Activated naive CD4-positive, alpha-beta T cell treated with anti-CD3 and anti-CD28 coated beads for 36 hours (primary cell): ENCODE measurements at regions of chr2 and their contacts with region 1.

Region 1: GRCh38 chr2:73736855-73737779 is at the start of gene TPRKB:
- DNase-seq: peak; percentile 99
- H3K4me3 Mint-ChIP-seq: peak within 1 kb of the TSS; percentile 88
- H3K27ac Mint-ChIP-seq: peak within 1 kb of the TSS; percentile 76
- H3K4me1 Mint-ChIP-seq: peaks cover 15% of the 10 kb centered on the region
- H3K27me3 Mint-ChIP-seq: no peaks in the 10 kb centered on the region
- total RNA-seq, gene TPRKB: 30.5 to 32.5 TPM

Region 2: GRCh38 chr2:73293534-73294171 is 443.5 kb before region 1 on chr2 and contains the start of gene EGR4:
- CTCF ChIA-PET with region 1: no interaction called
- intact Hi-C with region 1: loop called (anchors 2 kb)
- DNase-seq: peak; percentile 94
- H3K4me3 Mint-ChIP-seq: peak within 1 kb of the TSS; percentile 73
- H3K27ac Mint-ChIP-seq: no peak within 1 kb of the TSS
- H3K4me1 Mint-ChIP-seq: peaks cover 14% of the 10 kb centered on the region
- H3K27me3 Mint-ChIP-seq: peaks cover 65% of the 10 kb centered on the region
- total RNA-seq, gene EGR4: 0.07 to 0.12 TPM

Region 3: DNA sequence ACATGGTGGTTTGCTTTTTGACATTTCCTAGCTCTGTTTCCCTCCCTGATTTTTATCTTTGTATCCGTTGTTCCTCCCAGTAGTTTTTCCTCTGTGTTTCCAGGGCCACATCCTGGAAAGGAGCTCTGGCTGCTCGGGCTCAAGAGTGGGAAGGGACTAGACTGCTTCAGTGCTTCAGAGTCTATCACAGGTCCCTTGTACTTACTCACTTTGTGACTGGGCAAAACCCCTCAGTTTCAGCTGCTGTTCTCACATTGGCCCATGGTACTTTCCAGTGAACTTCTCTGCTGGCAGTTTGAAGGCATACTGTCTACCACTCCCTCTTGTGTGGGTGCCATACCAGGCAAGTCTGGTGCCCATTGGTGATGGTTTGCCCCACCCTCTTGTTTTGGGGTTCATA is 84.1 kb after region 1 on chr2:
- CTCF ChIA-PET with region 1: interaction called, 3 read pairs
- intact Hi-C with region 1: loop called (anchors 1 kb)
- DNase-seq: peak; percentile 78
- H3K4me3 Mint-ChIP-seq: no peak overlapping the region
- H3K27ac Mint-ChIP-seq: peak overlapping the region; percentile 79
- H3K4me1 Mint-ChIP-seq: peaks cover 33% of the 10 kb centered on the region
- H3K27me3 Mint-ChIP-seq: no peaks in the 10 kb centered on the region

Region 4: DNA sequence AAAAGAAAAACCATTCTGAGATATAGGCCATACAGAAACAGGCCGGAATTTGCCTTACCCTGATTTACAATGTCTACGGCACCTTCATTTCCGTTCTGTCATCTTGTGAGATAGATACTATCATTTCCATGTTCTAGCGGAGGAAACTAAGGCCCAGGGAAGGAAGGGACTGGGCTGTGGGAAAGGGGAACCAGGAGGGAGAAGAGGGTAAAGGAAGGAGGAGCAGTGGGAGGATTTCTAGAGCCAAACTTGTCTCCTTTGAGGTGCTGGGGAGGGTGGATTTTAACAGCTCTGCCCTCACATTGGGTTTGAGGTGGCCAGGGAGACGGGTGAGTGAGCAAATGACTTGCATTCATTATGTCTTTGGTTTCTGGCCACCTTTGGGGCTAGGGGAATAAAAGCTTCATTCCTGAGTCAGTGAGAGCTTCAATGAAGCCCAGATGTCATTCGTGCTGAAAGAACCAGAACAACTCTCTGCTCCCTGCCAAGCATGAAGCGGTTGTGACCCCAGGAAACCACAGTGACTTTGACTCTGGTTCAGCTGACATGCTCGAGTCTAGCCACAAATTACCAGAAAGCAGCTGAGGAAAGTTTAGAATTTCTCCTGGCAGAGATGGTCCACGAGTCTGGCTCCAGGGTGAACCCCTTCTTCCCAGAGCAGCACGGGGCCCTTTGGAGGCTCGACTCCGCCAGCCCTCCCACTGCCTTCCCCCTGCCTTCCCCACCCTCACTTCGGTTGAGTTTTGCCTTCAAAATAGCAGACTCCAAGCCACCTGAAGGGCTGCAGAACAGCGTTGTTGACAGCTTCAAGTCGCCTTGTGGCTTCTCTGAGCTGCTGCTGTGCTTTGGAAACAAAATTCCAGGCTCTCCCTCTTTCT is 159.5 kb after region 1 on chr2:
- CTCF ChIA-PET with region 1: no interaction called
- intact Hi-C with region 1: no loop called
- DNase-seq: peak; percentile 72
- H3K4me3 Mint-ChIP-seq: peak overlapping the region; percentile 8
- H3K27ac Mint-ChIP-seq: peak overlapping the region; percentile 65
- H3K4me1 Mint-ChIP-seq: peaks cover 33% of the 10 kb centered on the region
- H3K27me3 Mint-ChIP-seq: no peaks in the 10 kb centered on the region

Region 5: DNA sequence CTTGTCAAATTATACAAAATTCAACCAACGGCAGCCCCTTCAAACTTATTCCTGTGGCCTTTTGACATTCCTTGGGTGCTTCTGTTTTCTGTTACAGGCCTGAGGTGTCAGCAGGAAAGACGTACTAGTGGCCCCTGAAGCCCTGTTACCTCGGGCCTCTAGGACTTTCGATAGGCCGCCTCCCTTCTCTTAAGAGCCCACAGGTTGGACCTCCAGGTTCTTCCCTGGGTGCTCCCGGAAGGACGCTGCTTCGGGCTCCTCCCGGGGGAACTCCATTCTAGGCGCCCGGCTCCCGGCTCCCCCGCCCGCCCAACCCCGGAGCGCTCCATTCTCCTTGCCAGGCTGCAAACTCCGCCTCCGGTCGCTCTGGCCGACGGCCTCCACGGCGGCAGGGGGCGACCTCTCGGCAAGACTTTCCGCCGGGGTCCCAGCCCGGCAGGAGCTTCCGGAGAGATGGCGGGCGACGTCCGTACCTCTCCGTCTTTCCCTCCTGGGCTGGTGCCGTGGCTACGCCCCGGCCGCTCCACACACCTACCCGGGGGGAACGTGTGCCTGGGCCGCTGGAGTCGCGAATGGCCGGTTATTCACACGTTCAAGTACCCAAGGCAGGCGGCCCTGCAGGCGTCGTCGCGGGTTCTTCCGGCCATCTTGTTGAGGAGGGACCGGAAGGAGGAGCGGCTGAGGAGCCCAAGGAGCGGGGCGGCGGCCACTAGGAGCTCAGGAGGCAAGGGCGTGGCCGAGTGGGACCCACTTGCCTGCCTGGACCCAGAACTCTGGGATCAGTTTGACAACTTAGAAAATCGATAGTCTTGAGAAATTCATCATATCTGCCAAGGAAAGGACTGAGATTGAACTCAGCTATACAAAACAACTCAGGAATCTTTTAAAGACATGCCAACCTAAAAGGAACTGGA is 383.1 kb after region 1 on chr2:
- CTCF ChIA-PET with region 1: no interaction called
- intact Hi-C with region 1: loop called (anchors 1 kb)
- DNase-seq: peak; percentile 88
- H3K4me3 Mint-ChIP-seq: peak overlapping the region; percentile 82
- H3K27ac Mint-ChIP-seq: peak overlapping the region; percentile 88
- H3K4me1 Mint-ChIP-seq: peaks cover 12% of the 10 kb centered on the region
- H3K27me3 Mint-ChIP-seq: no peaks in the 10 kb centered on the region

Region 6: GRCh38 chr2:74198461-74199274 is 461.6 kb after region 1 on chr2 and contains the start of gene MTHFD2:
- CTCF ChIA-PET with region 1: no interaction called
- intact Hi-C with region 1: loop called (anchors 1 kb)
- DNase-seq: peak; percentile 95
- H3K4me3 Mint-ChIP-seq: peak within 1 kb of the TSS; percentile 97
- H3K27ac Mint-ChIP-seq: peak within 1 kb of the TSS; percentile 99
- H3K4me1 Mint-ChIP-seq: peaks cover 36% of the 10 kb centered on the region
- H3K27me3 Mint-ChIP-seq: no peaks in the 10 kb centered on the region
- total RNA-seq, gene MTHFD2: 683 to 692 TPM